Sigmoid colon (tissue), 7 donors: ENCODE measurements at regions of chr18 and their contacts with region 1.

Region 1: DNA sequence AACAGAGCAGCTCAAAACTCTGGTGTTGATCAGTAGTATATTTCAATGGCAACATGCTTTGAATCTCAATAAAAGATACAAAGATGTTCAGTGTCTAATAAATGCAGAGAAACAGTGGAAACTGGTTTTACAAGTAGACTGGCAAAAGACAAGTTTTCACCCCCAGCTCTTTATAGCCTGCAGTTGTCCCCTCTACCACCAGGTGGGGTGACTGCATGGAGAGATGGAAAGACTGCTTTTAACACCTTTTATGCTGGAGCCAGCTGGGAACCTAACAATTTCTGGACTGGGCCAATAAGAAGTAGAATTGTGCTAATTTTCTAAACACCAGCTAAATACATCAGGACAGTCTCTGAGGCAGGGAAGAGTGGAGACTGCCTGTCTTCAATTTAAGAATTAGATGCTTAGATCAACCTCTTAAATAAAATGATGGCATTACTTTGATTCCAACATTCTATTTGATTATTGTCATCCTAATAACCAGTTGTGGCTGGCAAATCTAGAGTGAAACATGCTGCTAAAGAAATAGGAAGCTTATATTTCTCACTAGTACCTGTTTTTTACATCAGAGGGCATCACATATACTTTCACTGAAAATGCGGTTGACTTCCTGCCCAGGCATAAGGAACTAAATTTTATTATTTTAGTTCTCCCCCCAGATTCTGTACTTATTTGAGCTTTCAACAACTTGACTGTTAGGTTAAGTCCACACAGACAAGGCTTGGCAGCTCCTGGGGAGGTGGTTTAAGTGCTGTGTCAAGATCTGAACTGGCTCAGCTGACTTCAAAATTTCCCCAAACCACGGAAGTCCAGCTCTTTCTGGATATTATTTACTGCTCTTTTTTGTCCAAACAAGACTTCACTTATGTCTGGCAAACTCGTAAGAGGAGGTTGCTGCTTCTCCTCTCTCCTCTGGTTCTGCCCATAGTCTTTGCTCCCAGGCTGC is 140.5 kb downstream of the TPGS2 start:
- DNase-seq: no peak
- H3K4me3 ChIP-seq: no peak overlapping the region
- H3K27ac ChIP-seq: no peak overlapping the region
- H3K4me1 ChIP-seq: peaks cover 0 to 40% (median 26%) of the 10 kb centered on the region in 4 donors
- H3K27me3 ChIP-seq: no peaks in the 10 kb centered on the region
- CTCF ChIP-seq: peak; percentile 71 to 92 (median 83)
- EP300 ChIP-seq: no peak
- POLR2A ChIP-seq: no peak

Region 2: GRCh38 chr18:36744261-36744876 is 56.1 kb after region 1 on chr18:
- intact Hi-C with region 1: no loop called
- DNase-seq: no peak
- H3K4me3 ChIP-seq: no peak overlapping the region
- H3K27ac ChIP-seq: peak overlapping the region in 3 of 4 donors; percentile 27 to 58 (median 54)
- H3K4me1 ChIP-seq: peaks cover 0 to 16% (median 12%) of the 10 kb centered on the region in 4 donors
- H3K27me3 ChIP-seq: no peaks in the 10 kb centered on the region
- CTCF ChIP-seq: no peak
- EP300 ChIP-seq: no peak
- POLR2A ChIP-seq: no peak

Region 3: GRCh38 chr18:36757081-36757480 is 68.8 kb after region 1 on chr18:
- intact Hi-C with region 1: loop called (anchors 1 kb)
- DNase-seq: no peak
- H3K4me3 ChIP-seq: no peak overlapping the region
- H3K27ac ChIP-seq: no peak overlapping the region
- H3K4me1 ChIP-seq: peaks cover 0 to 19% (median 7%) of the 10 kb centered on the region in 4 donors
- H3K27me3 ChIP-seq: no peaks in the 10 kb centered on the region
- CTCF ChIP-seq: peak; percentile 34 to 81 (median 70)
- EP300 ChIP-seq: no peak
- POLR2A ChIP-seq: no peak

Region 4: DNA sequence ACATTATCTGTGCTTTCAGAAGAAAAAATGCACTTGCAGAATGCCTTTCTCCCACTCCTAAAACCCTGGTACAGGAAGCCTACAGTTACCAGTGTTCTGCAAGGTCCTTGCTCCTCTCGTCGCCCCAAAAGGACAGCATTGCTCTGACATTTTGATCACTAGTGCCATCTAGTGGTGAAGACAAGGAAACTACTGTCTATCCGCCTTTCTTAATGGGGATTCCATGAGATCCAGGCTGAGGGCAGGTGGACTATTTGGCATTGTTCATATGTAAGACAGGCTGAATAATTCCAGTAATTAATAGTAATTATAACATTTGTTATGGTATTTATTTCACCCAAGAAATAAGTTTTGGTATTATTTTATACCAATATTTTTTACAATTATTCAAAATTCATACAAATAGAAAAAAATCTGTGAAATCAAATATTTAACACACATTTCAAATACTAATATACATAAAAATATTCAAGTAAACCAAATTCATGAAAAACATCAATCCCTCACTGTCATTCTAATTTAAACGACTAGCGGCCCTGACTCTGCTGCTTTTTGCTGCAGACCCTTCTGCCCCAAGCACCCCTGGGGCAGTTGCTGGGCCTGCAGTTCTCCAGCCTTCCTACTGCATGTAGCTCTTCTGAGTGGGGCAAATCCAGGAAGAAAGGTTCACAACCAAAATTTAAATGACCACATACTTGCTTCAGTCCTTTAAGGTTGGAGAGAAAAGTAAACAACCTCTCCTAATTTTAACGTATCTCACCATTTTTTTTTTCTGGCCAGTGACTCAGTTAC is 121.5 kb after region 1 on chr18:
- intact Hi-C with region 1: loop called (anchors 2 kb)
- DNase-seq: peak; percentile 67
- H3K4me3 ChIP-seq: no peak overlapping the region
- H3K27ac ChIP-seq: no peak overlapping the region
- H3K4me1 ChIP-seq: peaks cover 0 to 6% (median 0%) of the 10 kb centered on the region in 4 donors
- H3K27me3 ChIP-seq: no peaks in the 10 kb centered on the region
- CTCF ChIP-seq: peak; percentile 29 to 69 (median 57)
- EP300 ChIP-seq: no peak
- POLR2A ChIP-seq: no peak